ENCODE measurements at regions of chr20 and their contacts with region 1.

Region 1: GRCh38 chr20:6646021-6646636 is 121.4 kb upstream of the BMP2 start:
- DNase-seq: no peak
- H3K4me3 ChIP-seq: no peak overlapping the region
- H3K4me3 Mint-ChIP-seq: no peak overlapping the region
- H3K27ac Mint-ChIP-seq: no peak overlapping the region
- H3K4me1 ChIP-seq: peaks cover 9% of the 10 kb centered on the region; the same call in 1 of the 2 replicates
- H3K4me1 Mint-ChIP-seq: peaks cover 16% of the 10 kb centered on the region
- H3K27me3 ChIP-seq: no peaks in the 10 kb centered on the region
- H3K27me3 Mint-ChIP-seq: no peaks in the 10 kb centered on the region
- CTCF ChIP-seq: no peak

Region 2: GRCh38 chr20:6663104-6663503 is 17.0 kb after region 1 on chr20:
- CTCF ChIA-PET with region 1: no interaction called
- POLR2A ChIA-PET with region 1: no interaction called
- intact Hi-C with region 1: loop called (anchors 2 kb)
- DNase-seq: no peak
- H3K4me3 ChIP-seq: no peak overlapping the region
- H3K4me3 Mint-ChIP-seq: no peak overlapping the region
- H3K27ac Mint-ChIP-seq: no peak overlapping the region
- H3K4me1 ChIP-seq: peaks cover 36% of the 10 kb centered on the region
- H3K4me1 Mint-ChIP-seq: peaks cover 34% of the 10 kb centered on the region
- H3K27me3 ChIP-seq: no peaks in the 10 kb centered on the region
- H3K27me3 Mint-ChIP-seq: no peaks in the 10 kb centered on the region
- CTCF ChIP-seq: no peak

Region 3: DNA sequence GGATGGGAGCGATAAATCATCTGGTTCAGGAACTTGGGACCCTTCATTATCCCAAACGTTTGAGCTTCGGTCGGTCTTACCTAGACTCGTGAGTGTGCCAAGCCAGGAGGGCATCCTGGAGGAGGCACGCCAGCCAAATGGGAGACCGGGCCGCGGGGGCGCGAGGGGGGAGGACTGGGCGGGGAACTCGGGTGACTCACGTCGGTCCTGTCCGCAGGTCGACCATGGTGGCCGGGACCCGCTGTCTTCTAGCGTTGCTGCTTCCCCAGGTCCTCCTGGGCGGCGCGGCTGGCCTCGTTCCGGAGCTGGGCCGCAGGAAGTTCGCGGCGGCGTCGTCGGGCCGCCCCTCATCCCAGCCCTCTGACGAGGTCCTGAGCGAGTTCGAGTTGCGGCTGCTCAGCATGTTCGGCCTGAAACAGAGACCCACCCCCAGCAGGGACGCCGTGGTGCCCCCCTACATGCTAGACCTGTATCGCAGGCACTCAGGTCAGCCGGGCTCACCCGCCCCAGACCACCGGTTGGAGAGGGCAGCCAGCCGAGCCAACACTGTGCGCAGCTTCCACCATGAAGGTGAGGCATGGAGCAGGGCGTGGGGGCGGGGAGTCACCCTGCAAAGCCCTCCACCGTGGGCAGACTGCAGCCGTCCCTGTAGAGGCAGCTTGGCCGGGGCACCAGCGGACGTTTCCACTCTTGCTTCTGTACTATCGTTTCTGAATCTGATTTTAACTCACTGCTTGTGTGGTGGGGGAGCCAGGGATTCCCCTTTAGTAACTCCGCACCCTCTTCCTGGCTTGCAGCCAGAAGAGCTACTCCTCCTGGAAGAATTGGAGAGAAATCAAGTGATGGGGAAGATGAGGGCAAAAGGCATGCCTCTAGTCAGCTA is 124.0 kb after region 1 on chr20:
- CTCF ChIA-PET with region 1: no interaction called
- POLR2A ChIA-PET with region 1: no interaction called
- intact Hi-C with region 1: no loop called
- DNase-seq: peak; percentile 47 to 58
- H3K4me3 ChIP-seq: peak overlapping the region; percentile 96
- H3K4me3 Mint-ChIP-seq: peak overlapping the region; percentile 92
- H3K27ac Mint-ChIP-seq: peak overlapping the region; percentile 51
- H3K4me1 ChIP-seq: peaks cover 19% of the 10 kb centered on the region
- H3K4me1 Mint-ChIP-seq: peaks cover 30% of the 10 kb centered on the region
- H3K27me3 ChIP-seq: no peaks in the 10 kb centered on the region
- H3K27me3 Mint-ChIP-seq: no peaks in the 10 kb centered on the region
- CTCF ChIP-seq: no peak

Region 4: DNA sequence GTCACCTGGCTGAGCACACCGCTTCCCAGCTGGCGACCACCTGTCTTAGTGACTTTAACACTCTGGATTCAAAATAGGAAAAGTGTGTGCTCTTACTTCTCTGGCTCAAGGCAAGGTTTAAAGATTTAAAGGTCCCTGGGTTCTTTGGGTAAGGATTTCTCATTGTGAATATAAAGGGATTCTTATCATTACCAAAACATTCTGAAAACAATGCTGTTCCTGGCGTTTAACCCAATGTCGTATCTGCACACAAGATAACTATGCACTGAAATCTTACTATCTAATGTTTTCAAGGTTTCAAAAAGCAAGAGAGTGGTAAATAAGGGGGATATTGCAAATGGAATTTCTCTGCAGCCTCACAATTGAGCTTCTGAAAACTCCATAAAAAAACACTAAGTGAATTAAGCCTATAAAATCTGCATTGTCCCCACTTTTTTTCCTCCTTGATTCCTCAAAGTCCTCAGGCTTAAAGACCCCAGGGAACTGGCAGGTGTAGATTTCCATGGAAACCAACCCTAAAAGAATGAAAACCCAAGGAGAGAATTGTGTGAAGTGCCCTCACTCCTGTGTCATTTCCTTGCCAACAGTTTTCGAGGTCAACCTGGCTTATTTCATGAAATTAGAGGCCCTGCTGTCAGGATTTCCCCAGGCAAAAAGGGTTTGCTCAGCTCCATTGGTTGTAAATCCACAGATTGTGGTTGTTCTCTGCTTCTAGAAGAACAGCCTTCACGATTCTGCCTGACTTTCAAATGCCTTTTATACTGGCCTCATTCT is 165.3 kb after region 1 on chr20:
- CTCF ChIA-PET with region 1: no interaction called
- POLR2A ChIA-PET with region 1: no interaction called
- intact Hi-C with region 1: no loop called
- DNase-seq: no peak
- H3K4me3 ChIP-seq: no peak overlapping the region
- H3K4me3 Mint-ChIP-seq: no peak overlapping the region
- H3K27ac Mint-ChIP-seq: no peak overlapping the region
- H3K4me1 ChIP-seq: no peaks in the 10 kb centered on the region
- H3K4me1 Mint-ChIP-seq: no peaks in the 10 kb centered on the region
- H3K27me3 ChIP-seq: no peaks in the 10 kb centered on the region
- H3K27me3 Mint-ChIP-seq: no peaks in the 10 kb centered on the region
- CTCF ChIP-seq: no peak